Caco-2 (cell line): ENCODE measurements at regions of chr6 and their contacts with region 1.

Region 1: GRCh38 chr6:113719056-113719455 is 138.1 kb upstream of the MARCKS start:
- DNase-seq: peak; percentile 68 to 77
- H3K4me3 ChIP-seq: no peak overlapping the region
- H3K4me3 Mint-ChIP-seq: no peak overlapping the region
- H3K27ac Mint-ChIP-seq: peak overlapping the region; percentile 65
- H3K4me1 ChIP-seq: peaks cover 18% of the 10 kb centered on the region
- H3K4me1 Mint-ChIP-seq: peaks cover 25% of the 10 kb centered on the region
- H3K27me3 ChIP-seq: no peaks in the 10 kb centered on the region
- H3K27me3 Mint-ChIP-seq: no peaks in the 10 kb centered on the region
- CTCF ChIP-seq: no peak

Region 2: GRCh38 chr6:113596387-113597230 is 122.4 kb before region 1 on chr6:
- CTCF ChIA-PET with region 1: no interaction called
- POLR2A ChIA-PET with region 1: no interaction called
- intact Hi-C with region 1: loop called (anchors 5 kb)
- DNase-seq: no peak
- H3K4me3 ChIP-seq: no peak overlapping the region
- H3K4me3 Mint-ChIP-seq: no peak overlapping the region
- H3K27ac Mint-ChIP-seq: no peak overlapping the region
- H3K4me1 ChIP-seq: peaks cover 11% of the 10 kb centered on the region; the same call in 1 of the 2 replicates
- H3K4me1 Mint-ChIP-seq: peaks cover 22% of the 10 kb centered on the region
- H3K27me3 ChIP-seq: no peaks in the 10 kb centered on the region
- H3K27me3 Mint-ChIP-seq: no peaks in the 10 kb centered on the region
- CTCF ChIP-seq: no peak